Endothelial cell of umbilical vein (primary cell): ENCODE measurements at regions of chr3 and their contacts with region 1.

Region 1: DNA sequence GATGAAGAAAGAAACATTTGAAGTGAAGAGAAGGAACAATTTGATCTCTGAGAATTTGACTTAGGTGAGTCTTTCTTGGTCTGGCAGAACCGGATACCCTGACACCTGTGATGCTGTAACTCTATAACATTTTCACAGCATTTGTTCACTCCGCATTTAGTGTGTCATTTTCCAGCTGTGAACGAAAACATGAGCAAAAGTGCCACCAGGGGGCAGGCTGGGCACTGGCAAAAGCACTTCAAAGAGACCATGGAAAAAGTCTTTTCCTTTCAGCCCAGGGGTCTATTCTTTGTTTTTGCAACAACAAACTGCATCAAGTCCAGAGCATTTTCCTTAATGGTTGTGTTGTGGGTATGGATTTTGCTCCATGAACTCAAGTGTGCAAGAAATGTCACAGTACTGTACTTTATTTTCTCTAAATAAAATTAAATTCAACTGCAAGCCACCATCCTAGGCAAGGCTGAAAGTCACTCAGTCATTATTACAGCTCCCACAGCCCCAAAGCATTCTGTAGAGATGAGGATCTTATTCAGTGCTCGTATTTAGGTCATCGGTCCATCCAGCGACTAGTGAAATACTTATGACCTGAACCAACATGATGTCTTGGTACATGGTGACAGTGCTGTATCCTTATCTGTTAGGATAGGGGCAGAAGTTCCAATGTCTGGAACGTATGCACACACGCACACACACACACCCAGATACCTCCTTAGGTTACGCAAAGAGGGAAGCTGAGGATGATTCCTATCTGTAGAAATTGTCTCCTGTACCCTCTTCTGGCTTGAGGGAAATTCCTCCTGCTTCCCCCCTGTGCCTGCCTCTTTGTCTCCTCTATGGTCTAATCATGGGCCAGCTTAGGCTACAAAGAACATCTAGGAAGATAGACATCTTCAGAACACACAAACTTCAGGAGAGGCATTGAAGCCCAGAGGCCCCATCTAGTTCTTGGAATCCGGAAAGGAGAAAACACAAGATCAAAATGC is 125.5 kb downstream of the GADL1 start:
- DNase-seq: peak; percentile 70
- H3K4me3 ChIP-seq: no peak overlapping the region
- H3K27ac ChIP-seq: no peak overlapping the region
- H3K4me1 ChIP-seq: no peaks in the 10 kb centered on the region
- H3K27me3 ChIP-seq: peaks cover 0 to 3% of the 10 kb centered on the region in 2 experiments
- CTCF ChIP-seq: peak; percentile 80 to 85
- POLR2A ChIP-seq: no peak

Region 2: GRCh38 chr3:30012941-30013543 is 756.0 kb before region 1 on chr3:
- CTCF ChIA-PET with region 1: interaction called, 11 read pairs
- POLR2A ChIA-PET with region 1: no interaction called
- dilution Hi-C with region 1: no loop called
- intact Hi-C with region 1: no loop called
- DNase-seq: peak; percentile 76
- H3K4me3 ChIP-seq: no peak overlapping the region
- H3K27ac ChIP-seq: no peak overlapping the region
- H3K4me1 ChIP-seq: peaks cover 5% of the 10 kb centered on the region
- H3K27me3 ChIP-seq: no peaks in the 10 kb centered on the region
- CTCF ChIP-seq: peak; percentile 55 to 56
- POLR2A ChIP-seq: no peak

Region 3: GRCh38 chr3:30934208-30934550 is 165.2 kb after region 1 on chr3:
- CTCF ChIA-PET with region 1: interaction called, 22 read pairs
- POLR2A ChIA-PET with region 1: no interaction called
- dilution Hi-C with region 1: no loop called
- intact Hi-C with region 1: no loop called
- DNase-seq: peak; percentile 48
- H3K4me3 ChIP-seq: no peak overlapping the region
- H3K27ac ChIP-seq: no peak overlapping the region
- H3K4me1 ChIP-seq: no peaks in the 10 kb centered on the region
- H3K27me3 ChIP-seq: peaks cover 0 to 1% of the 10 kb centered on the region in 2 experiments
- CTCF ChIP-seq: peak in 1 of 2 donors; percentile 31
- POLR2A ChIP-seq: no peak

Region 4: DNA sequence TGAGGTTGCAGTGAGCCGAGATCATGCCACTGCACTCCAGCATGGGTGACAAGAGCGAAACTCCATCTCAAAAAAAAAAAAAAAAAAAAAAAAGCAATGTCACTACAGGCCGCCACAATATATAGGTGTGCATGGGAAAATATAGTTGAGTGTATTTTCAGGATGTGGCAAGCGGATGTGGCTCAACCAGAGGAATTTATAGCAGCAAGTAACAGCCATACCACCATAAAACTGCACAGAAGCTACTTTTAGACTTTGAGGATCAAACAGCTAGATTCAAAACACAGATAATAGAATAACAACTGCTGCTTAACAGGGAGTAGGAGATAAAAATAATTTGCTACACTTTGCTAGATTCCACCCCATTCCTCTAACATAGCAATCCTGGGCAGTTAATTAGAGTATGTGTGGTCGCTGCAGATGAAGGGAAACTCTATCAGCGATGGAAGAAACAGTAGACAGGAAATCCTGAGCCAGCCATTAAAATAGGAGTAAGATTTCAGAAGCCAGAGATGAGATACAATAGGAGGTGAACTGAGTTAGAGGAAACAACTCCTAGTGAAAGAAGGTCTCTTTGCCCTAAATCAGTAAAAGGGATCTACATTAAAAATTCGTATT is 445.0 kb after region 1 on chr3:
- CTCF ChIA-PET with region 1: no interaction called
- POLR2A ChIA-PET with region 1: no interaction called
- dilution Hi-C with region 1: no loop called
- intact Hi-C with region 1: loop called (anchors 2 kb)
- DNase-seq: peak; percentile 46
- H3K4me3 ChIP-seq: no peak overlapping the region
- H3K27ac ChIP-seq: no peak overlapping the region
- H3K4me1 ChIP-seq: peaks cover 12% of the 10 kb centered on the region
- H3K27me3 ChIP-seq: no peaks in the 10 kb centered on the region
- CTCF ChIP-seq: no peak
- POLR2A ChIP-seq: no peak

Region 5: GRCh38 chr3:31448035-31448881 is 679.3 kb after region 1 on chr3:
- CTCF ChIA-PET with region 1: interaction called, 4 read pairs
- POLR2A ChIA-PET with region 1: no interaction called
- dilution Hi-C with region 1: no loop called
- intact Hi-C with region 1: loop called (anchors 1 kb)
- DNase-seq: peak; percentile 26
- H3K4me3 ChIP-seq: no peak overlapping the region
- H3K27ac ChIP-seq: no peak overlapping the region
- H3K4me1 ChIP-seq: no peaks in the 10 kb centered on the region
- H3K27me3 ChIP-seq: no peaks in the 10 kb centered on the region
- CTCF ChIP-seq: peak; percentile 53 to 74
- POLR2A ChIP-seq: no peak